HepG2 (cell line): ENCODE measurements at regions of chr22 and their contacts with region 1.

Region 1: DNA sequence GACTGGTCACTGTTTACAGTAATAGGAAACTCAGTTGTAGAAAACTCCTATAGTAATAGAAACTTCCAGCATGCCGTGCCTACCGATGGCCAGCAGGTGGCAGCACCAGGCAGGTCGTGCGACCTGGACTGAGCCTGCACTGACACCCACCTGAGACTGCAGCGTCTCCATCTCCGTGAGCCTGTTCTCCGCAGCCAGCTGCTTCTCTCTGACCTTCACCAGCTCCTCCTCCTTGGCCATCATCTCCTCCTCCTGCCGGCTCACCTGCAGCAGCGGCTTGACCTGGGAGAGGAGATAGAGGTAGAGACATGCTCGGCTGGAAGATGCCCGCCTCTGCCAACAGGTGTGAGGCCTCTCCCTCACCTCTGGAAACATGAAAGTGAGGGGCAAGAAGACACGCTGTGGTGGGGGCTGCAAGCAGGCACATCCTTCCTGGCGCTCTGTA is 48.5 kb downstream of the APOL1 start:
- DNase-seq: peak; percentile 48
- ATAC-seq: peak; percentile 79
- H3K4me3 ChIP-seq: no peak overlapping the region
- H3K27ac ChIP-seq: no peak overlapping the region
- H3K4me1 ChIP-seq: no peaks in the 10 kb centered on the region
- H3K27me3 ChIP-seq: no peaks in the 10 kb centered on the region
- CTCF ChIP-seq: peak; percentile 94
- EP300 ChIP-seq: no peak
- POLR2A ChIP-seq: no peak
- RAD21 ChIP-seq: peak; percentile 89

Region 2: DNA sequence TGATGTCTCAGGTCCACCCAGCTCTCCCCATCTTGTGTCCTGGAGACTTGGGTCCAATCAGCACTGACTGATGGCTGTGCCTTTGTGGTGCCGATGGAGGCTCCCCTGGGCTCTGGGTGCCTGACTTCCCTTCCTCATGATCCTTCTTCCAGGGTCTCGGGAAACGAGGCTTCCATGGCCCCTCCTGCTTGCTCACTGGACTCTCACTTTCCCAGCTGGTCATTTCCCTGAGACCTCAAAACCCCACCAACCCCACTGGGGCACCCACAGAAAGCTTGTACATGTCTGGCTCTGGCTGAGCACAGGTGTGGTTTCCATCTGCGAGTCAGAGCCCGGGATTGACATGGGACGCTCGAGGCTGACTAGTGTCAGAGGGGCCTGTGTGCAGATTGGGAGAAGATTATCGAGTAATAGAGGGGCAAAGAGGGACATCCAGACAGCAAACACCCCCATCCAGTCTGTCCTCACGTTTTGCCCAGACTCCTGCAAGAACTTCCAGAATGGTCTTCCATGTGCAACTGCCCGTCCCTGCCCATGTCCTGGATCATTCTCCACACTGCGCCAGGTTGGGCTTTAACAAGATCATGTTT is 33.4 kb before region 1 on chr22:
- CTCF ChIA-PET with region 1: no interaction called
- POLR2A ChIA-PET with region 1: no interaction called
- in situ Hi-C with region 1: no loop called
- intact Hi-C with region 1: no loop called
- DNase-seq: no peak
- ATAC-seq: no peak
- H3K4me3 ChIP-seq: no peak overlapping the region
- H3K27ac ChIP-seq: no peak overlapping the region
- H3K4me1 ChIP-seq: peaks cover 50% of the 10 kb centered on the region
- H3K27me3 ChIP-seq: no peaks in the 10 kb centered on the region
- CTCF ChIP-seq: no peak
- EP300 ChIP-seq: no peak
- POLR2A ChIP-seq: no peak
- RAD21 ChIP-seq: no peak

Region 3: DNA sequence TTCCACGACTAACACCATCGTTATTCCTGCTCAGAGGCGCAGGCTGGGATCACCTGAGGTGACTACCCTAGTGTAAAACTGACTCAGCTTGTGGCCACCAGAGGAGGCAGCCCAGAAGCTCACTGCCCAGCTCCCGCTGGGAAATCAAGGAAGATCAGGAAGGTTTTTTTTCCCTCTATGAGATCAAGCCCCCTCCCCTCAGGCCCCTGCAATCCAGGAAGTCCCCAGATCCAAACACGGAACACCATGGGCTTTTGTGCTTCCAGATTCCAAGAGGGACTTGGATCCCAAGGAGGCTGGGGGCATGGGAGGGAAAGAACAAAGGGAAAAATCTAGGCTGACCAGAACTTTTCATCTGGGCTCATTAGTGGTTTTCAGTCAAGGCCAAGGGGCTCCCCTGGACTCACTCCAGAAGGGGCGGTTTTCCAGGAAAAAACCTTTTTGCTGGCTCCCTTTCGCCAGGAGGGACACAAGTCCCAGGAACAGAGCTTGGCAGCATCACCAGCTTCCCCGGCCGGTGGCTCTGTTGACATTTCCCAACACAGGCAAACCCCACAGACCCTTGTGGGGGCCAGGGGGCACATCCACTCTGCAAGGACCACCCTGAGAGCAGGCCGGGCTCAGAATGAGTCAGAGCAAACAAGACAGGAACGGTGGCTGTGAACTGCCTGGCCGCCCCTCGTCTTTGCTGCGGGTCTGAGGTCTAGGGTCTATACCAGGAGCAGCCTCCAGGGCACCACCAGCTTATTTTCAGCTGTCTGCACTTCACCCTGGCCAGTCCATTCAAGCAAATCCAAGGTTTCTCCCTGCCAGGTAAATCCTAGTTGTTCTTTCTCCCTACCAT is 49.6 kb after region 1 on chr22:
- CTCF ChIA-PET with region 1: no interaction called
- POLR2A ChIA-PET with region 1: no interaction called
- in situ Hi-C with region 1: no loop called
- intact Hi-C with region 1: no loop called
- DNase-seq: peak; percentile 91
- ATAC-seq: peak; percentile 68
- H3K4me3 ChIP-seq: peak overlapping the region; percentile 9 to 66 (median 28)
- H3K27ac ChIP-seq: peak overlapping the region; percentile 94
- H3K4me1 ChIP-seq: peaks cover 93% of the 10 kb centered on the region
- H3K27me3 ChIP-seq: no peaks in the 10 kb centered on the region; a peak in 1 of 5 replicates
- CTCF ChIP-seq: peak; percentile 24; the same call in 1 of the 2 replicates
- EP300 ChIP-seq: peak; percentile 42 to 88; a peak in 3 of 4 replicates
- POLR2A ChIP-seq: no peak; a peak in 1 of 4 replicates
- RAD21 ChIP-seq: 0 out of 2 replicates have a peak, but pooled peaks have one; percentile 22

Region 4: GRCh38 chr22:36461669-36462649 is 160.6 kb after region 1 on chr22:
- CTCF ChIA-PET with region 1: no interaction called
- POLR2A ChIA-PET with region 1: no interaction called
- in situ Hi-C with region 1: loop called (anchors 5 kb)
- intact Hi-C with region 1: no loop called
- DNase-seq: peak; percentile 63
- ATAC-seq: peak; percentile 74
- H3K4me3 ChIP-seq: peak overlapping the region in 1 of 3 experiments; percentile 46; a peak in 2 of 6 replicates
- H3K27ac ChIP-seq: no peak overlapping the region
- H3K4me1 ChIP-seq: peaks cover 54% of the 10 kb centered on the region
- H3K27me3 ChIP-seq: no peaks in the 10 kb centered on the region
- CTCF ChIP-seq: no peak
- EP300 ChIP-seq: no peak
- POLR2A ChIP-seq: 0 out of 4 replicates have a peak, but pooled peaks of 1 of the 2 experiments have one; percentile 23
- RAD21 ChIP-seq: no peak

Region 5: GRCh38 chr22:36470162-36470993 is 169.0 kb after region 1 on chr22:
- CTCF ChIA-PET with region 1: interaction called, 20 read pairs
- POLR2A ChIA-PET with region 1: no interaction called
- in situ Hi-C with region 1: loop called (anchors 5 kb)
- intact Hi-C with region 1: loop called (anchors 1 kb)
- DNase-seq: peak; percentile 76
- ATAC-seq: peak; percentile 90
- H3K4me3 ChIP-seq: no peak overlapping the region
- H3K27ac ChIP-seq: peak overlapping the region; percentile 45
- H3K4me1 ChIP-seq: peaks cover 10% of the 10 kb centered on the region
- H3K27me3 ChIP-seq: no peaks in the 10 kb centered on the region
- CTCF ChIP-seq: peak; percentile 96
- EP300 ChIP-seq: no peak
- POLR2A ChIP-seq: no peak
- RAD21 ChIP-seq: peak; percentile 96

Region 6: DNA sequence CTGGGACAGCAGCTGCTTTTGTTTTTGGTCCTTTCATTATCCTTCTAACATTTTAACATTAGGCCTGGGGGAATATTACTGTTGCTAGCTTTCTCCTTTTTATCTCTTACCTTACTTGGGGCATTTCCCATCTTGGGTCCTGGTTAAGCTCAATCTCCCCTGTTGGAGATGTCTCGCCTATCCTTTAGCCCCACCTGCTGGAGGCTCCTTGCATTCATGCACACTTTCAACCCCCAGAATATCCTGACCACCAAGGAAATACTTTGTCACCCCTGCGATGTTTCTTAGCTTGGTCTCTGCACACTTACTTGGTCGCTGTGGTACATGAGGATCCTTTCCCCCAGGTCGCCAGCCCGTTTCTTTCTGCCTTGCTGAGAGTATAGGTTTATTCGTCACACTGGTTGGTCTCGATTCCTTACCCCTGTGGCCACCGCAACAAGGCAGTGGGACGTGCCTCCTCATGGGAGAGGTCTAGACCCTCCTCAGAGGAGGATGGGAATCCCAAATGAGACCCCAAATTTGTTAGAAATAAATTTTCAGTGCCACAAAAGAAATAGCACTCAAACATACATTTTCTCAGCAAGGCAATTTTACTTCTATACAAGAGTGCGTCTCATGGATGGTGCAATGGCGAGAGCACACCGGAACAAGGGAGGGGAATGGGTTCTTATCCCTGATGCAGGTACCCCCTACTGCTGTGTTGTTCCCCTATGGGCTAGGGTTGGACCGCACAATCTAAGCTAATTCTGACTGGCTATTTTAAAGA is 185.4 kb after region 1 on chr22:
- CTCF ChIA-PET with region 1: interaction called, 17 read pairs
- POLR2A ChIA-PET with region 1: interaction called, 3 read pairs
- in situ Hi-C with region 1: no loop called
- intact Hi-C with region 1: loop called (anchors 1 kb)
- DNase-seq: peak; percentile 53
- ATAC-seq: peak; percentile 39; the same call in 2 of the 3 replicates
- H3K4me3 ChIP-seq: no peak overlapping the region
- H3K27ac ChIP-seq: no peak overlapping the region
- H3K4me1 ChIP-seq: peaks cover 7% of the 10 kb centered on the region
- H3K27me3 ChIP-seq: no peaks in the 10 kb centered on the region
- CTCF ChIP-seq: peak; percentile 73
- EP300 ChIP-seq: no peak
- POLR2A ChIP-seq: no peak
- RAD21 ChIP-seq: peak; percentile 47; the same call in 1 of the 2 replicates